AG04450 (cell line): ENCODE measurements at regions of chr17 and their contacts with region 1.

Region 1: DNA sequence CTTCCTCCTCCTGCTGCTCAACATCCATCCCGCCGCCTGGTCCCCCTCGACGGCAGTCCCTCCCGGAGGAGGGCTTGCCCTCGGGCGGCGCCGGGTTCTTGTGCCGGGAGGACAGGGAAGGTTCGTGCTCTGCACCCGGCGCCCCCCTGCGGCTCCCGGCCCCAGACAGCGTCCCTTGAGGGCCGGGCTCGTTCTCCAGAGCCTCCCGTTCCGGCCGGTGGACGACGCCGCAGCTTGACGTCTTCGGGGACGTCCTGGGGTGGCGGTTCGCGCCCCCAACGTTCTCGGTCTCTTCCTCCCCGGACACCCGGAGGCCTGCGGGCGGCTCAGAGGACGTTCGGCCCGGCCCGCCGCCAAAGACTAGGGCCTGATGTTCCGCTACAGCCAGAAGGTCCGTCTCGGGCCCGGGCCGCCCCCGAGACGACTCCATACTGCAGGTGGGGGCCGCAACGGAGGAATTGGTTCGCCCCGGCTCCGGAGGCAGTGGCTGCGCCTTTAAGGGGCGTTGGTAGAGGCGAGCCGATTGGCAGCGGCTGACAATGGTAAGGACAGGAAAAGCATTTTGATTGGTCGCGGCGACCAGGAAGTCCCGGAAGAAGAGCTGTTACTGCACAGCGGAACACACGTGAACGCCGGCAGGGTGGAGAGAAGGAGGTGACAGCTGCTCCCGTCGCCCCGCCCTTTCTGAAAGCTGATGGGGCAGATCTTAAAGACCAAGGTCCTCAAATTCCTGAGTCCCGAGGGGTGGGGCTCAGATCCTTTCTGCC is at the start of gene BORCS6:
- DNase-seq: peak; percentile 97
- H3K4me3 ChIP-seq: peak within 1 kb of the TSS; percentile 75
- H3K27ac ChIP-seq: peak within 1 kb of the TSS; percentile 90
- H3K27me3 ChIP-seq: no peaks in the 10 kb centered on the region
- CTCF ChIP-seq: peak; percentile 8; the same call in 1 of the 2 replicates
- polyA plus RNA-seq, gene BORCS6: 2.3 and 2.7 TPM in 2 replicates

Region 2: GRCh38 chr17:8087075-8087944 is 102.6 kb before region 1 on chr17 and contains the start of gene ALOX12B:
- CTCF ChIA-PET with region 1: no interaction called
- POLR2A ChIA-PET with region 1: no interaction called
- DNase-seq: no peak
- H3K4me3 ChIP-seq: no peak within 1 kb of the TSS
- H3K27ac ChIP-seq: no peak within 1 kb of the TSS
- H3K27me3 ChIP-seq: peaks cover 53% of the 10 kb centered on the region
- CTCF ChIP-seq: no peak
- polyA plus RNA-seq, gene ALOX12B: not detected in 2 replicates

Region 3: GRCh38 chr17:8131844-8132441 is 58.0 kb before region 1 on chr17:
- CTCF ChIA-PET with region 1: no interaction called
- POLR2A ChIA-PET with region 1: no interaction called
- DNase-seq: no peak
- H3K4me3 ChIP-seq: no peak overlapping the region
- H3K27ac ChIP-seq: no peak overlapping the region
- H3K27me3 ChIP-seq: no peaks in the 10 kb centered on the region
- CTCF ChIP-seq: no peak

Region 4: DNA sequence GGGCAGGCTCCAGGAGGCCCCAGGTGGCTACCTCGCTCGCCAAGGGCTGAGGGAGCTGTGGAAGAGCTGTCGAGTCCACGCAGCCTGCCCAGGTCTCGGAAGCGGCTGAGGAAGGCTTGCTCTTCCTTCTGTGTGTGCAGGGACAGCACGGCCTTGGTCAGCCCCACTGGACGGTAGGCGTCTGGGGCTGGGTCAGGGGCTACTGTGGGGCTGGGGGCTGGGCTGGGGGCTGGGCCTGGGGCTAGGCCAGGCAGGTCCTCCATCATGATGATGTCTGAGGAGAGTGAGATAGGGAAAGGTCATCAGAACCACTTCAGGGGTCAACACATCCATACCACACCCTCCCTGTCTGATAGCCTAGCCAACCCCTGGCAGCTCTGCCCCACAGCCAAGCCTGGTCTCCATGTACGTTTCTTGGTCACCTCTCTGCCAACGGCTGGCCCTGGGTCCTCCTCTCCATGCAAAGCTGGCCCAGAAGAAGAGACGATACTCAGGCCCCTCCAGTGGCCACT is 45.1 kb before region 1 on chr17:
- CTCF ChIA-PET with region 1: no interaction called
- POLR2A ChIA-PET with region 1: no interaction called
- DNase-seq: no peak
- H3K4me3 ChIP-seq: no peak overlapping the region
- H3K27ac ChIP-seq: no peak overlapping the region
- H3K27me3 ChIP-seq: no peaks in the 10 kb centered on the region
- CTCF ChIP-seq: no peak

Region 5: DNA sequence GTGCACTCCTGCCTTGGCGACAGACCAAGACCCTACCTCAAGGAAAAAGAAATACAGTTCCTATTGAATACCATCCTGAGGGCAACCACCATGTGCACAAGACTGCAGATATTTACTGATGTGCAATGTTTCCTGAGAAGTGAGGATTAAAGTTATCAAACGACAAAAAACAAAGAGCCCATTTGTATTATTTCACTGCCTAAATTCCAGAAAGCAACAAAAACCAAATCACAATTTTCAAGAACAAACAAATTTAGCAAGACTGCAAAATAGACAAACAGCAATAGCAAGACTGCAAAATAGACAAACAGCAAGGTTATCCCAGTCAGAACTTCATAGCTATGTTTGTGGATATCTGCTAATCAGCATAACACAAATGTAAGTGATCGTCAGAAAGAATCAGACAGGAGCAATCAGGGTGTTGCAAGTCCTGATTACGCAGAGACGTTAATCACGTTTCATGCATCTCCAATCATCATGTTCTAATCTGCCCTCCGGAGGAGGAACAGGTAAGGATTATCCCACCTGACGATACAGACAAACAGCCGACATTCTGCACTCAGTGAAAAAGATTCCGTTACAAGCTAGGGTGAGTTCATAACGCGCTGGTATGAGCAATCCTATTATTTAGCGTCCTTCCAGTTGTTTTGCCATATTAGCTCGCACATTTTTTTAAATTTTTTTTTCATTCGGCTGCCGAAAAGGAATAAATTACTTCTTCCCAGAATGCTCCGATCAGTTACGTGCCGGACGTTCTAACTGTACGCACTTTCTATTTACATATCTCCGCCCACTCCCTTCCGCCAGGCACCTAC is 16.6 kb before region 1 on chr17:
- CTCF ChIA-PET with region 1: no interaction called
- POLR2A ChIA-PET with region 1: interaction called, 25 read pairs
- DNase-seq: peak; percentile 96
- H3K4me3 ChIP-seq: peak overlapping the region; percentile 60
- H3K27ac ChIP-seq: peak overlapping the region; percentile 98
- H3K27me3 ChIP-seq: no peaks in the 10 kb centered on the region
- CTCF ChIP-seq: no peak

Region 6: GRCh38 chr17:8222630-8223356 is 32.9 kb after region 1 on chr17:
- CTCF ChIA-PET with region 1: interaction called, 3 read pairs
- POLR2A ChIA-PET with region 1: interaction called, 25 read pairs
- DNase-seq: peak; percentile 93
- H3K4me3 ChIP-seq: peak overlapping the region; percentile 87
- H3K27ac ChIP-seq: peak overlapping the region; percentile 92
- H3K27me3 ChIP-seq: no peaks in the 10 kb centered on the region
- CTCF ChIP-seq: no peak

Region 7: GRCh38 chr17:8283356-8283755 is 93.5 kb after region 1 on chr17:
- CTCF ChIA-PET with region 1: no interaction called
- POLR2A ChIA-PET with region 1: interaction called, 11 read pairs
- DNase-seq: no peak
- H3K4me3 ChIP-seq: no peak overlapping the region
- H3K27ac ChIP-seq: no peak overlapping the region
- H3K27me3 ChIP-seq: no peaks in the 10 kb centered on the region
- CTCF ChIP-seq: no peak